ENCODE measurements at regions of chr3 and their contacts with region 1.

Region 1: DNA sequence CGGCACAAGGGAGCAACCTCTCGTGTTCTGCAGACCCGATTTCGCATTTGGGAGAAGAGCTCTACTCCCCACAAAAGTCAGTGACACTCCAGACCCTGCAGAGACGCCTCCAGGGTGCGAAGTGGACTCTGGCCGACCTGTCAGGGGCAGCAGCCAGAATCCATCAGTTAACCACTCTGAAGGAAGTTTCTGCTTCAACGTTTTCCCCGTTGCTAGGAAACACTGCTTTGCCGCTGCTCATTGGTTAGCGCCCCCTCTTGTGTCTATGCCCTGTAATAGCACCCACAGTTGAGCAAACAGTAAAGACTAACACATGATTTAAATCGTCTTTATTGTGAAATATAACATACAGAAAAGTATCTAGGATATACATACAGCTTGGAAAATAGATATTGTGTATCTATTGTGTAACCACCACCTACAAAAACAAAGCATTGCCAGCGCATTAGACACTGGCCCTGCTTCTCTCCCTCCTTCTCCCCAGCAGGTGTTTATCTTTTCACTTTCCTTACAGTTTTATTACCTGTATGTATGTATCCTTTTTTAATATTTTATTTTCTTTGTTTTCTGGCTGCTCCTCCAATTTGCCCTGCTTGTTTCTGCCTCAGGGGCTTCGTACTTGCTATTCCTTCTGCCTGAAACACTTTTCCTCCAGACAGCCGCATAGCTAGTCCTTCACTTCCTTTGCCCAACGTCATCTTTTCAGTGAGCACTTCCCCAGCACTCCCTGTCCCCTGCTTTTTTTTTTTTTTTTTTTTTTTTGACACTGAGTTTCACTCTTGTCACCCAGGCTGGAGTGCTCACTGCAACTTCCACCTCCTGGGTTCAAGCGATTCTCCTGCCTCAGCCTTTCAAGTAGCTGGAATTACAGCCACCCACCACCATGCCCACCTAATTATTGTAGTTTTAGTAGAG is 38.8 kb downstream of the TMEM40 start:
- DNase-seq: peak; percentile 45
- ATAC-seq: peak; percentile 99
- H3K4me3 Mint-ChIP-seq: peak overlapping the region; percentile 74
- H3K27ac Mint-ChIP-seq: peak overlapping the region; percentile 69
- H3K4me1 Mint-ChIP-seq: peaks cover 7% of the 10 kb centered on the region
- H3K27me3 Mint-ChIP-seq: peaks cover 3% of the 10 kb centered on the region
- CTCF ChIP-seq: peak; percentile 93

Region 2: DNA sequence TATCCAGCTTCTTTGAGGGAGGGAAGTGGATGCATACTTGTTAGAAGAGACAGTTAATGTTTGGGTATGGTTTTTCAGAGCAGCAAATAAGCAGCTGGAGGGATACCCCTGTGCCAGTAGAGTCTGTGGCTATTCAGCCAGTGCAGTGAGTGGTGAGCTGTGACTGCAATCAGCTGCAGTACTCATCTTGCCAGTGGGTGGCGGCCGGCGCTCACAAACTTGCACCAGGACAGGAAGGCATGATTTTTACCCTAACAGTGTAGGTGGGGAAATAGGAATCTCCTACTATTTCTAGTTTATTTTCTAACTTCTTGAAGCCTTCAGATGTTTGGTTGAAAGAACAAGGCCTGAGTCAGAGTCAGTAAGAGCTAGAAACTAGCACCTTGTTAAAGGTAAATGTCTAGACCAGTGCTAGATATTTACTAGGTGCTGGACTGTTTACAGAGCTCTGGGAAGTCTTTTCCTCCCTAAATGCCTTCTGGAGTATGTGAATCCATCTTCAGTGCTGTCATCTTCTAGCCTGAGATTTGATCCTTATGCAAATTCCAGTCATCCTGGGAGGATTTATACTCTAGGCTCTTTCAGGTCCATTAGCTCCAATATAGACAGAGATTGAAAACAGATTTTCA is 585.1 kb before region 1 on chr3:
- CTCF ChIA-PET with region 1: interaction called, 6 read pairs
- POLR2A ChIA-PET with region 1: no interaction called
- intact Hi-C with region 1: loop called (anchors 5 kb)
- DNase-seq: peak; percentile 34
- ATAC-seq: peak; percentile 77
- H3K4me3 Mint-ChIP-seq: no peak overlapping the region
- H3K27ac Mint-ChIP-seq: no peak overlapping the region
- H3K4me1 Mint-ChIP-seq: no peaks in the 10 kb centered on the region
- H3K27me3 Mint-ChIP-seq: peaks cover 17% of the 10 kb centered on the region
- CTCF ChIP-seq: peak; percentile 33

Region 3: DNA sequence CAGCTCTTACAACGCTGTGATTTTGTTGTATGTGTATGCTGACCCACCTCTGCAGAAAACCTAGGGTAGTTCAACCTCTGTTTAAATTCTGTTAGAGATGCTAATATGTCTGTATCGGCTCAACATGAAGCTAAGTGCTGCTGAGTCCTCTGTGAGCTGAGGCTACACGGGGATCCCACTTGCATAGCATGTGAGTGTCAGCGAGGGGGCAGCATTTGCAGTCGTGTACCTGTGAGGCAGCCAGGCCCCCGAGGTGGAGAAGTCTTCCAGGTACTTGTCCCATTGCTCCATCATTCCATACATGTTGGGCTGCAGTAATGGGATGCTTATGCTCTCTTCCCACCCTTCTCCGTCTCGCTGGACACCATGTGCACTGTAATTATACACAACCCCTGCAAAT is 178.6 kb before region 1 on chr3:
- CTCF ChIA-PET with region 1: interaction called, 3 read pairs
- POLR2A ChIA-PET with region 1: no interaction called
- intact Hi-C with region 1: loop called (anchors 5 kb)
- DNase-seq: no peak
- ATAC-seq: no peak
- H3K4me3 Mint-ChIP-seq: no peak overlapping the region
- H3K27ac Mint-ChIP-seq: no peak overlapping the region
- H3K4me1 Mint-ChIP-seq: no peaks in the 10 kb centered on the region
- H3K27me3 Mint-ChIP-seq: no peaks in the 10 kb centered on the region
- CTCF ChIP-seq: no peak

Region 4: DNA sequence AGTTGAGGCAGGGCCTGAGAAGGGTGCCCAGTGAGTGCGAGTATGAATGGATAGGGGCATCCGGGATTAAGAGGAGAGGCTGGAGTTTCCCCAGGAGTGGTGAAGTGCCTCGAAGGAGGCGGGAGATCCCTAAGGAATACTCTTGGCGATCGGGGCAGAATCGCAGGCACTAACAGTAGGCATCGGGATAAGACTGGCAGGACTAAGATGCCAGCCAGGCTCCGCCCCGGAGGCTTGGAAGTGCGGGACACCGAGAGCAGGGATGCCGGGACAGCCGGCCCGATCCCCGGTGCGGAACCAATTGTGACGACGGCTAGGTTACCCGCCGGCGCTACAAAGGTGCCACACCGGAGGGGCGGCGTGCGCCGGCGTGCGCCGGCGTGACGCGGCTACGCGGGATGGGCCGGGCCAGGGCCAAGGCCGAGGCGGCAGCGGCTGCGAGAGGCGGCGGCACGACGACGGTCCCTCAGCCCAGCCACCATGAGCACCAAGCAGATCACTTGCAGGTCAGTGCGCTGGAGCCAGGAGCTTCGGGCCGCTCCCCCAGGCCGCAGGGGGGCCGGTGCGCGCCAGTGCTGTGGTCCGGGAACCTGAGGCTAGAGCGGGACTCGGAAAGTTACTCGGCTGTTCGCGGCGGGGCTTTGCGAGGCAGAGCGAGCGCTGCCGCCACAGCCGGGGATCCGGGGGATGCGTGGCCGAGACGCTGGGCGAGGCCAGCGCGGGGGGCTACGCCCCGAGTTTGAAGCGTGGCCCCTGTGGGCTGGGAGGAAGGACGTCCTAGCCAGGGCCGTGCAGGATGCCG is 163.4 kb before region 1 on chr3 and contains the start of gene MKRN2:
- CTCF ChIA-PET with region 1: interaction called, 4 read pairs
- POLR2A ChIA-PET with region 1: no interaction called
- intact Hi-C with region 1: loop called (anchors 5 kb)
- DNase-seq: peak; percentile 85
- ATAC-seq: peak; percentile 96
- H3K4me3 Mint-ChIP-seq: peak within 1 kb of the TSS; percentile 89
- H3K27ac Mint-ChIP-seq: peak within 1 kb of the TSS; percentile 62
- H3K4me1 Mint-ChIP-seq: peaks cover 62% of the 10 kb centered on the region
- H3K27me3 Mint-ChIP-seq: peaks cover 9% of the 10 kb centered on the region
- CTCF ChIP-seq: no peak
- total RNA-seq, gene MKRN2: 22.2 and 22.3 TPM in 2 replicates

Region 5: DNA sequence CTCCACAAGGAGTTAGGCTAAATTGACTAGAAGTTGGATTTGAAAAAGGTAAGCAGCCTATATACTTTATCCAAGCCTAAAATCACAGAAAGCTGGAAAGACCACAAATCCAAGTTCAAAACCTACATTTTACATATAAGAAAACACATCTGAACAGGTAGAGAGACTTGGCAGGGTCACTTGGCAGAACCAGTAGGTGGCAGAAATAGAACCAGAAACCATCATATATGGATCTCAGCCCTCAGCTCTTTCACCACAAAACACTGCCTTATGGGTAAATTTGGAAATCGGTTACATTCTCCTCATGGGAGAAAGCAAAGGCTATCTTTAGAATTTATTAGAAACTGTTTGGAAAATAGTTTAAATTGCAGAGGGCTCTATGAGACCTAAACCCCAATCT is 119.2 kb before region 1 on chr3:
- CTCF ChIA-PET with region 1: no interaction called
- POLR2A ChIA-PET with region 1: no interaction called
- intact Hi-C with region 1: loop called (anchors 10 kb)
- DNase-seq: no peak
- ATAC-seq: no peak
- H3K4me3 Mint-ChIP-seq: no peak overlapping the region
- H3K27ac Mint-ChIP-seq: no peak overlapping the region
- H3K4me1 Mint-ChIP-seq: no peaks in the 10 kb centered on the region
- H3K27me3 Mint-ChIP-seq: no peaks in the 10 kb centered on the region
- CTCF ChIP-seq: no peak

Region 6: GRCh38 chr3:12663936-12664908 is 56.0 kb before region 1 on chr3 and contains the start of gene RAF1:
- CTCF ChIA-PET with region 1: interaction called, 4 read pairs
- POLR2A ChIA-PET with region 1: no interaction called
- intact Hi-C with region 1: loop called (anchors 1 kb)
- DNase-seq: peak; percentile 96
- ATAC-seq: peak; percentile 94
- H3K4me3 Mint-ChIP-seq: peak within 1 kb of the TSS; percentile 98
- H3K27ac Mint-ChIP-seq: peak within 1 kb of the TSS; percentile 98
- H3K4me1 Mint-ChIP-seq: peaks cover 37% of the 10 kb centered on the region
- H3K27me3 Mint-ChIP-seq: no peaks in the 10 kb centered on the region
- CTCF ChIP-seq: no peak
- total RNA-seq, gene RAF1: 89.9 and 103 TPM in 2 replicates

Region 7: GRCh38 chr3:12706504-12707253 is 13.6 kb before region 1 on chr3:
- CTCF ChIA-PET with region 1: interaction called, 6 read pairs
- POLR2A ChIA-PET with region 1: no interaction called
- intact Hi-C with region 1: loop called (anchors 1 kb)
- DNase-seq: peak; percentile 24
- ATAC-seq: peak; percentile 98
- H3K4me3 Mint-ChIP-seq: no peak overlapping the region
- H3K27ac Mint-ChIP-seq: no peak overlapping the region
- H3K4me1 Mint-ChIP-seq: no peaks in the 10 kb centered on the region
- H3K27me3 Mint-ChIP-seq: peaks cover 3% of the 10 kb centered on the region
- CTCF ChIP-seq: no peak